ENCODE measurements at regions of chr1 and their contacts with region 1.

Region 1: DNA sequence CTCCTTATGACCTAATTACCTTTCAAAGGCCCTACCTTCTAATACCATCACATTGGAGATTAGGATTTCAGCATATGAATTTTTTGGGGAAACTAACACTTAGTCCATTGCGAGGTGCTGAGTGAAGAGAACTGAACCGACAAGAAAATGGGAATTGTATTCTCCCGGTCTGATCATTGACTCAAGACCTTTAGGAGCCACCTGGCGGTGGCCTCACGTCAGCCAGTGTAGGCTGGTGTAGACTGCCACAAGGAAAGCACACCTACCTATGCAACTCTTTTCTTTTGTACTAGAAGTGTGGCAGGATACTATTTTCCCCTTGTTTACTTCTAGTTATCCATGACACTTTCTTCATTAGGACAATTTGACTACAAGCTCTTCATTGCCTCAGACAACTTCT is 333.5 kb upstream of the B3GALT2 start:
- DNase-seq: peak; percentile 31
- ATAC-seq: peak; percentile 97
- H3K4me3 ChIP-seq: no peak overlapping the region
- H3K27ac ChIP-seq: no peak overlapping the region
- H3K4me1 ChIP-seq: no peaks in the 10 kb centered on the region
- H3K27me3 ChIP-seq: no peaks in the 10 kb centered on the region
- CTCF ChIP-seq: peak; percentile 65
- EP300 ChIP-seq: no peak
- POLR2A ChIP-seq: no peak
- RAD21 ChIP-seq: no peak

Region 2: DNA sequence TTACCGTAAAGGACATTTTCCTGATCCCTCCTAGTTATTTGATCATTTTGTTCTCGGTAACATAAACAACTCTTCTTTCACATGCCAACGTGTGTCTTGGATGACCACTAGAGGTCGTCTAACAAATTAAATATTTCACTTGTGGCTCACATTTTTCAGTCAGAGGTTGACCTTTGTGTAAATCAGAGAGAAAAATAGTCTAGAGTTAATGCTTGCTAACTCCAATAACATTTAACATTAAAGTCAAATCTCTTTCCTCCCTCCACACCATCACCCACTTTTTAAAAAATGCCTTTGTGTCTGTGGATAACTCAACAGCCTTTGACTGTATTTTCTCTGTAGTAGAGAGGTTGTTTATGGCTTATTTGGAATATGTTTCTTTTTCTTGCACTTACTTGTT is 113.0 kb before region 1 on chr1:
- CTCF ChIA-PET with region 1: interaction called, 13 read pairs
- POLR2A ChIA-PET with region 1: no interaction called
- in situ Hi-C with region 1: no loop called
- intact Hi-C with region 1: loop called (anchors 1 kb)
- DNase-seq: peak; percentile 28
- ATAC-seq: peak; percentile 61; the same call in 2 of the 3 replicates
- H3K4me3 ChIP-seq: no peak overlapping the region
- H3K27ac ChIP-seq: no peak overlapping the region
- H3K4me1 ChIP-seq: no peaks in the 10 kb centered on the region
- H3K27me3 ChIP-seq: no peaks in the 10 kb centered on the region
- CTCF ChIP-seq: peak; percentile 67
- EP300 ChIP-seq: no peak
- POLR2A ChIP-seq: no peak
- RAD21 ChIP-seq: no peak